ENCODE measurements at regions of chrX and their contacts with region 1.

Region 1: GRCh38 chrX:74382613-74383012 is 38.7 kb upstream of the SLC16A2 start:
- DNase-seq: peak; percentile 75
- H3K4me3 ChIP-seq: no peak overlapping the region
- H3K27ac ChIP-seq: no peak overlapping the region
- H3K4me1 ChIP-seq: no peaks in the 10 kb centered on the region
- H3K27me3 ChIP-seq: no peaks in the 10 kb centered on the region
- CTCF ChIP-seq: peak; percentile 80

Region 2: DNA sequence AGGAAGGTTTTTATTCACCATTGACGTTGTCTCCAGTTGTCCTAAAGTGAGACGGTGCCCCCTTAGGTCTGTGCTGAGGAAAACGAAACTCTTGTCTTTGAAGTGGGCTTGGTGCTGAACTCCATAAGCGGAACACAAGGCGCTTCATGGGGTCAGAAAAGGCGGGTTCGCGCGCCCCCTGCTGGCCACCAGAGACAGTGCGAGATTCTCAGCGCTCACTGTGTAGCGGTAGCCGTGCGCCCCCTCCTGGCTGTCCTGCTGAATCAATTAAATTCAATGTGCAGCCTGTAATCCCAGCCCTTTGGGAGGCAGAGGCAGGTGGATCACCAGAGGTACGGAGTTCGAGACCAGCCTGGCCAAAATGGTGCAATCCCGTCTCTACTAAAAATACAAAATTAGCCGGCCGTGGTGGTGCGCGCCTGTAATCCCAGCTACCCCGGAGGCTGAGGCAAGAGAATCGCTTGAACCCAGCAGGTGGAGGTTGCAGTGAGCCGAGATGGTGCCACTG is 167.7 kb after region 1 on chrX:
- intact Hi-C with region 1: loop called (anchors 2 kb)
- DNase-seq: peak; percentile 84
- H3K4me3 ChIP-seq: no peak overlapping the region
- H3K27ac ChIP-seq: no peak overlapping the region
- H3K4me1 ChIP-seq: no peaks in the 10 kb centered on the region
- H3K27me3 ChIP-seq: no peaks in the 10 kb centered on the region
- CTCF ChIP-seq: peak; percentile 99

Region 3: GRCh38 chrX:75603833-75604232 is 1221.2 kb after region 1 on chrX:
- intact Hi-C with region 1: loop called (anchors 10 kb)
- DNase-seq: no peak
- H3K4me3 ChIP-seq: no peak overlapping the region
- H3K27ac ChIP-seq: no peak overlapping the region
- H3K4me1 ChIP-seq: no peaks in the 10 kb centered on the region
- H3K27me3 ChIP-seq: no peaks in the 10 kb centered on the region
- CTCF ChIP-seq: peak; percentile 71